ENCODE measurements at regions of chr12 and their contacts with region 1.

Region 1: DNA sequence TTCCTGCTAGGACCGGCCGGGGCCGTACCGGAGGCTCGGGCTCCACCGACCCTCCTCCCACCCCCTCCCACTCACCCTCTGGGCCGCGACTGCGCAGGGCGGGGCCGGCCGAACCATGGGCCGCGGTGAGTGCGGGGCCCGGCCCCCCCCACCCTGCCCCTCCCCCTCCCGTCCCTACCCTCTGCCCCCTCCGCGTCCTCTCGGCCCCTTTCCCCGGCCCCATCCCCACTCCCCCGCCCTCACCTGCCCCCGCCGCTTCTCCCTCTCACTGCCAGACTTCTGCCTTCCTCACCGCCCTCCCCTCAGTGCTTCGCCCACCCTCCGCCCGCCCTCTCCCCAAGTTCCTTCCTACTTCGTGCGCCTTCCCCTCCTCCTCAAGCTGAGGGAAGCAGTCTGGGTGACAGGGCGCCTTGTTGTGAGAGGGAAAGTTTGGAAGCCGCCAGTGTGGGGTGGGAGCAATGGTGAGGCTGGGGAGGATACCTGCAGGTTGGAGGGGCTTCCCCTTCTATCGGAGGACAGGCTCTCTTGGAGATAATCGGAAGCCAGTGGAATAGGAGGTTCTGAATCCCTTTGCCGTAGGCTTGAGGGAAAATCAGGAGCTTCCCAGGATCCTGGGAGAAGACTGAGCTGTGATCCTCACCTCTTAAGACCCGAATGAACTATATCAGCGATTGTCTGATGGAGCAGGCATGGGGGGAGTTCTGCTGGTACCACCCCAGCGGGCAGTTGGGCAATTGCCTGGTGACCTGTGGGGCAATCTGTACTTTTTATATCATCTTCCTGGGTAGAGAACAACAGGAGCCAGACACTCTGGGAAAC is 472 bp downstream of the MBD6 start:
- DNase-seq: peak; percentile 64
- H3K4me3 ChIP-seq: peak overlapping the region; percentile 75
- H3K27ac ChIP-seq: peak overlapping the region; percentile 85
- H3K4me1 ChIP-seq: peaks cover 37% of the 10 kb centered on the region
- H3K27me3 ChIP-seq: no peaks in the 10 kb centered on the region
- CTCF ChIP-seq: no peak

Region 2: GRCh38 chr12:57500213-57500612 is 22.9 kb before region 1 on chr12:
- CTCF ChIA-PET with region 1: no interaction called
- POLR2A ChIA-PET with region 1: interaction called, 15 read pairs
- intact Hi-C with region 1: no loop called
- DNase-seq: no peak
- H3K4me3 ChIP-seq: no peak overlapping the region
- H3K27ac ChIP-seq: no peak overlapping the region
- H3K4me1 ChIP-seq: no peaks in the 10 kb centered on the region
- H3K27me3 ChIP-seq: no peaks in the 10 kb centered on the region
- CTCF ChIP-seq: no peak

Measured in A673 (cell line).